Activated T-helper 1 cell treated with anti-CD3 and anti-CD28 coated beads, Interleukin-12 subunit alpha, Interleukin-12 subunit beta, Interleukin-2, Interleukin-4 antibody, amounts not matched to agents 30 ng/mL and 10 ng/mL and 1 ng/mL, durations not matched to agents 14 hours and 24 hours and 36 hours (primary cell): ENCODE measurements at regions of chr11 and their contacts with region 1.

Region 1: GRCh38 chr11:134331354-134332188 is at the start of gene GLB1L2:
- DNase-seq: peak; percentile 84
- H3K4me3 Mint-ChIP-seq: peak within 1 kb of the TSS; percentile 85
- H3K27ac Mint-ChIP-seq: peak within 1 kb of the TSS; percentile 59
- H3K4me1 Mint-ChIP-seq: peaks cover 24% of the 10 kb centered on the region
- H3K27me3 Mint-ChIP-seq: peaks cover 39% of the 10 kb centered on the region
- total RNA-seq, gene GLB1L2: 8.9 and 11.5 TPM in 2 replicates

Region 2: GRCh38 chr11:133956650-133957633 is 374.6 kb before region 1 on chr11 and contains the start of gene IGSF9B:
- intact Hi-C with region 1: loop called (anchors 5 kb)
- DNase-seq: peak; percentile 92
- H3K4me3 Mint-ChIP-seq: peak within 1 kb of the TSS; percentile 88
- H3K27ac Mint-ChIP-seq: peak within 1 kb of the TSS; percentile 89
- H3K4me1 Mint-ChIP-seq: peaks cover 47% of the 10 kb centered on the region
- H3K27me3 Mint-ChIP-seq: peaks cover 17% of the 10 kb centered on the region
- total RNA-seq, gene IGSF9B: 73.6 and 77.2 TPM in 2 replicates

Region 3: DNA sequence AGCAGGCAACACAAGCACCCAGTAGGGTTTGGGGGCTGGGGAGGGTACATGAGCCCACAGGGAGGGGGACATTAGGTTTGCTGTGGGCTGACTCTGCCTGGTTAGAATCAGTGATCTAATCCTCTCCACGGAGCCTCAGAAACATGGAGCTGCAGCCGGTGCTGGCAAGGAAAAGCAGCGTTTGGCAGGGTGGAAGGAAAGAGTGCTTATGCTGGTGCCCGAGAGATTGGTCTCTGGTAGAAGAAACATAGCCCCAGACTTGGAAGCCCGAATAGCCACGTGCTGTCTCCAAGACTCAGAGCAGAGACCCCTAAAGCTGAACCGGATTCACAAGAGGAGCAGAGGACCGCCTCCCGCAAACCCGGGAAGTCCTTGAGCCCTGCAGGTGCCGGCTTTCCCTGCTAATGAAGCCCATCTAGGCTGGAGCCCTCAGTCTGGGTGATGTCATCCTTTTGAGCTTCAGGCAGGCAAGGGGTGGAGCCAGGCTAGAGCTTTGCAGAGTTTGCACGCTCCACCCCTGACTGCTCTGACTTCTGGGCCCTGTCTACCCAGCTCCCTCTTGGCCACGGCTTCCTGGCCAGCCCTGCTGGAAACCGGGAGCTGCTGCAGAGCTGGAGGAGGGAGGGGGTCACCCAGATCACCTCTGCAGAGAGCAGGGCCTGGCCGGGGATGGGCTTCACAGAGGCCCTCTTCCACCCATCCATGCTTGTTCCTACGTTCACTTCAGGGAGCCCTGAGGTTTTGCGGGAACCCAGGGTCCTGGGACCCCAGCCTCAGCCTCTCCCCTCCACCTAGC is 297.7 kb before region 1 on chr11:
- intact Hi-C with region 1: loop called (anchors 10 kb)
- DNase-seq: peak; percentile 65
- H3K4me3 Mint-ChIP-seq: peak overlapping the region; percentile 24
- H3K27ac Mint-ChIP-seq: peak overlapping the region; percentile 59
- H3K4me1 Mint-ChIP-seq: peaks cover 55% of the 10 kb centered on the region
- H3K27me3 Mint-ChIP-seq: peaks cover 7% of the 10 kb centered on the region

Region 4: DNA sequence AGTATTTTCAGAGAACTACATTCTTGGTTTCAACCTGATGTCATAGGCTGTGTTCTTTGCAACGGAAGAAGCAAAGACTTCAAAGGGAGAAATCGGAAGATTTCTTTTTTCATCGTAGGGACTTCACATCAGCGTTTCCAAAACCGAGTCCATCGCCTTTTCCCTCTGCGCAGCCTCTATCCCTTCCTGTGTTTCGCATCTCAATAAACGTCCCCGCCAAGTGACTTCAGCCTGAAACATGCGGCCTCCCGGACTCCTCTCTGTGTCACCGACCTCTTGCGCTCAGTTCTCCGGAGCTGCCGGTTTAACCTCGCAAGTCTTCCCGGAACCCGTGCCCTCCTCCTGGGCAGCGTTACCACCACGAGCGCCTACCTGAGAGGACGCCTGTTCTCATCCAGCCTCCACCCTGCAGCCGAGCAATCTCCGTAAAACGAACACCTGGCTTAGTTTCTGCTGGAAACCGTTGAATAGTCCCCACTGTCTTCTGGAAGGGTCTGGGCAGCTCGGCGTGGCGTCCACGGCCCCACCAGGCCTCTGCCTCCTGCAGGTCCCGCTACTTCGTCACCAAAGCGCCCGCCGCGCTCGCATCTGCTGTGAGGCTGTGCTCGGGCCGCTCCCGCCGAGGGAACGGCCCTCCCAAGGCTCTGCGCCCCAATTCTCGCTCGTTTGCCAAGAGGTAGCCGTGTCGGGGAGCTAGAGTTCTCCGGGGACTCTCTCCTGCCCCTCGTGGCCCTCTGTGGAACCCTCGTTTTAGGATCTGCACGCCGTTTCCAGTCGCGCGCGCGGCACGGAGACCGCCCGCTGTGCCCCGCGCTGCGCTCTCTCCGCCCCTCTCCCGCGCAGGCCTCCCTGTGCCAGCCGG is 55.8 kb before region 1 on chr11 and contains the start of gene GLB1L3:
- intact Hi-C with region 1: loop called (anchors 1 kb)
- DNase-seq: peak; percentile 81
- H3K4me3 Mint-ChIP-seq: peak within 1 kb of the TSS; percentile 96
- H3K27ac Mint-ChIP-seq: peak within 1 kb of the TSS; percentile 93
- H3K4me1 Mint-ChIP-seq: peaks cover 53% of the 10 kb centered on the region
- H3K27me3 Mint-ChIP-seq: peaks cover 2% of the 10 kb centered on the region
- total RNA-seq, gene GLB1L3: 14.6 and 16.1 TPM in 2 replicates

Region 5: DNA sequence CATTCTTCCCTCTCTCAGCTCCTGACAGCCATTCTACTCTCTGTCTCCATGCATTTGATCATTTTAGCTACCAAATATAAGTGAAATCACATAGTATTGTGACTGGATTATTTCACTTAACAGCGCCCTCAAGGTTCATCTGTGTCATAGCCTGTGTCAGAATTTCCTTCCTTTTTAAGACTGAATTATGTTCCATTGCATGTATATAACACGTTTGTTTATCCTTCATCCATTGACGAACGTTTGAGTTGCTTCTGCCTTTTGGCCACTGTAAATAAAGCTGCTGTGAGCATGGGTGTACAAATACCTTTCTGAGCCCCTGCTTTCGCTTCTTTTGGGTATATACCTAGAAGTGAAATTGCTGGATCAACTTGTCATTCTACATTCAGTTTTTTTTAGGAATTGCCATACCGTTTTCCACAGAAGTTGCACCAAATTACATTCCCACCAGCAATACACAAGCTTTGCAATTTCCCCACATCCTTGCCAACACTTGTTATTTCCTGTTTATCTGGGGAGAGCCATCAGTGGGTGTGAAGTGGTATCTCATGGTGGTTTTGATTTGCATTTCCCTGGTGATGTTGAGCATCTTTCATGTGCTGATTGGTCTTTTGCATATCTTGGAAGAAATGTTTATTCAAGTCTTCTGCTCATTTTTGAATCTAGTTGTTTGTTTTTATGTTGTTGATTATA is 17.7 kb after region 1 on chr11:
- intact Hi-C with region 1: loop called (anchors 1 kb)
- DNase-seq: peak; percentile 20
- H3K4me3 Mint-ChIP-seq: peak overlapping the region; percentile 28
- H3K27ac Mint-ChIP-seq: peak overlapping the region; percentile 80
- H3K4me1 Mint-ChIP-seq: peaks cover 24% of the 10 kb centered on the region
- H3K27me3 Mint-ChIP-seq: no peaks in the 10 kb centered on the region

Region 6: GRCh38 chr11:134476435-134477021 is 145.0 kb after region 1 on chr11:
- intact Hi-C with region 1: no loop called
- DNase-seq: no peak
- H3K4me3 Mint-ChIP-seq: no peak overlapping the region
- H3K27ac Mint-ChIP-seq: no peak overlapping the region
- H3K4me1 Mint-ChIP-seq: no peaks in the 10 kb centered on the region
- H3K27me3 Mint-ChIP-seq: peaks cover 14% of the 10 kb centered on the region